SK-N-SH (cell line): ENCODE measurements at regions of chr2 and their contacts with region 1.

Region 1: GRCh38 chr2:182650704-182651103 is 65.4 kb upstream of the DNAJC10 start:
- DNase-seq: peak; percentile 16
- H3K4me3 ChIP-seq: peak overlapping the region in 1 of 2 experiments; percentile 44; a peak in 2 of 4 replicates
- H3K27ac ChIP-seq: no peak overlapping the region
- H3K4me1 ChIP-seq: peaks cover 0 to 17% of the 10 kb centered on the region in 2 experiments; a peak in 2 of 4 replicates
- H3K27me3 ChIP-seq: no peaks in the 10 kb centered on the region
- CTCF ChIP-seq: peak; percentile 68
- EP300 ChIP-seq: no peak
- RAD21 ChIP-seq: peak; percentile 72

Region 2: DNA sequence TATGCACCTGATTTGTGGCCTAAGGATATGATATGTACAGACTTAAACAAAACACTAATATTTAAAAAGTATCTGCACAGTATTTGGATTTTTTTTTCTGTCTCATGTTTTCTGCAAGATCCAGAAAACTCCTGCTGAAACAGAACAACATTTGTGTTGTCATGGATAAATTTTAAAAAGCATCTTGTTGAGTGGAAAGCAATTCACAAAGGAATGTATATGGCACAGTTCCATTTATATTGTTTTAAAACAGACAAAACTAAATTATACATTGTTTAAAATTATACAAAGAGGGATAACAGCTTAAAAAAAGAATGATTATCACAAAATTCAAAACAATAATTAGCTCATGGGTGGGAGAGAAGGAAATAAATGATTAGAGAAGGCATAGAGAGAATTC is 471.5 kb before region 1 on chr2:
- CTCF ChIA-PET with region 1: interaction called, 176 read pairs
- POLR2A ChIA-PET with region 1: no interaction called
- DNase-seq: no peak
- H3K4me3 ChIP-seq: no peak overlapping the region
- H3K27ac ChIP-seq: no peak overlapping the region
- H3K4me1 ChIP-seq: no peaks in the 10 kb centered on the region
- H3K27me3 ChIP-seq: no peaks in the 10 kb centered on the region
- CTCF ChIP-seq: no peak
- EP300 ChIP-seq: no peak
- RAD21 ChIP-seq: no peak

Region 3: GRCh38 chr2:182186132-182186735 is 464.5 kb before region 1 on chr2:
- CTCF ChIA-PET with region 1: interaction called, 176 read pairs
- POLR2A ChIA-PET with region 1: interaction called, 3 read pairs
- DNase-seq: peak; percentile 8
- H3K4me3 ChIP-seq: no peak overlapping the region
- H3K27ac ChIP-seq: no peak overlapping the region
- H3K4me1 ChIP-seq: no peaks in the 10 kb centered on the region
- H3K27me3 ChIP-seq: no peaks in the 10 kb centered on the region
- CTCF ChIP-seq: peak; percentile 88
- EP300 ChIP-seq: no peak
- RAD21 ChIP-seq: peak; percentile 91

Region 4: GRCh38 chr2:182240862-182241371 is 409.8 kb before region 1 on chr2:
- CTCF ChIA-PET with region 1: interaction called, 14 read pairs
- POLR2A ChIA-PET with region 1: no interaction called
- DNase-seq: peak; percentile 14
- H3K4me3 ChIP-seq: no peak overlapping the region; a peak in 1 of 4 replicates
- H3K27ac ChIP-seq: peak overlapping the region in 1 of 2 experiments; percentile 22; a peak in 1 of 4 replicates
- H3K4me1 ChIP-seq: peaks cover 0 to 6% of the 10 kb centered on the region in 2 experiments; a peak in 1 of 4 replicates
- H3K27me3 ChIP-seq: no peaks in the 10 kb centered on the region
- CTCF ChIP-seq: peak; percentile 48
- EP300 ChIP-seq: no peak
- RAD21 ChIP-seq: peak; percentile 42

Region 5: GRCh38 chr2:182666674-182667314 is 16.1 kb after region 1 on chr2:
- CTCF ChIA-PET with region 1: interaction called, 15 read pairs
- POLR2A ChIA-PET with region 1: no interaction called
- DNase-seq: peak; percentile 27
- H3K4me3 ChIP-seq: no peak overlapping the region; a peak in 1 of 4 replicates
- H3K27ac ChIP-seq: no peak overlapping the region
- H3K4me1 ChIP-seq: no peaks in the 10 kb centered on the region
- H3K27me3 ChIP-seq: no peaks in the 10 kb centered on the region
- CTCF ChIP-seq: peak; percentile 66
- EP300 ChIP-seq: no peak
- RAD21 ChIP-seq: peak; percentile 52